Lower leg skin (tissue), 4 donors: ENCODE measurements at regions of chr16 and their contacts with region 1.

Region 1: DNA sequence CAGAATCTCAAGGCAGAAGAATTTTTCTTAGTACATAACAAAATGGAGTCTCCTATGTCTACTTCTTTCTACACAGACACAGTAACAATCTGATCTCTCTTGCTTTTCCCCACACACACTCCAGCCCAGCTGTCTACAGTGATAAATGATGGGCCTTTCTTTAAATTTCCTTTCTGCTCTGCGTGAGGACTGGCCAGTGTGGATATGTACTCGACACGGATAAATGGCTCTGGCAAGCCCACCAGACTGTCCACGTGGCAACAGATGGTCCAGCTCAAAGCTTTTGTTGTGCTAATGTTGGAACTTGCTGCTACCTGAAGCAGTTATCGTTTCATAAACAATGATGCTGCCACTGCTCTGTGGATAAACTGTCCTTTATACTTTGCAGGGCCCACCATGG is 410.7 kb downstream of the TMEM114 start:
- DNase-seq: no peak
- H3K4me3 ChIP-seq: no peak overlapping the region
- CTCF ChIP-seq: no peak
- POLR2A ChIP-seq: no peak

Region 2: DNA sequence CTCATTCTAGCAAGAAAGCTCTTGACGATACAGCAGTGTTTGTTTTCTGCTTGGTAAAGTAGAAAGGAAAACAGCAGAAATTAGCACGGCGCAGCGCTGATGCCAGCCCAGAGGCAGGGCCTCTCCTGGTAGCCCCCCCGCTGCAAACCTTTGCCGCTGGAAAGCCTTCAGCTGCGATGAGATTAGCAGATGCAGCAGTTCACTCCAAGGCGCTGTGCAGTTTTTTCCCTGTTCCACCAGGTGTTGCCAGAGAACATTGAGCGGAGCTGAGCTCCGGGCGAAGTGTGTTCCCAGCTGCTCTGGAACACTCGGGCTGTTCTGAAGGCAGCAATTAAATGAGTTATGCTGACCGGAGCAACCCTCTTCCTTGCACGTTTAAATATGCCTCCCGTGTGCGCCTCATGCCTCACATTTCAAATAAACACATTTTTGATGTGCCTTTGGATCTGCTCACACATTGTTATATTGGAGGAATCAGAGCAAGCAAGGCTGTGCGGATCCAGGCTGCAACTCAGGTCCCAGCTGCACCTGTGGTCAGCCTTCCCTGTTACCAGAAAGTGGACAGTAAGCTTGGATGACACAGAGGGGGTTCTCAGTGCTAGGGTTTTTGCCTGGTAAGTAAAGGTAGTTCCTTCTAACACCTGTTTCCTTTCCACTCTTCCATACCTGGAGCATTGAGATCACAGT is 774.3 kb before region 1 on chr16:
- intact Hi-C with region 1: loop called (anchors 5 kb)
- DNase-seq: peak in 1 of 2 donors; percentile 24
- H3K4me3 ChIP-seq: no peak overlapping the region
- CTCF ChIP-seq: no peak
- POLR2A ChIP-seq: no peak

Region 3: DNA sequence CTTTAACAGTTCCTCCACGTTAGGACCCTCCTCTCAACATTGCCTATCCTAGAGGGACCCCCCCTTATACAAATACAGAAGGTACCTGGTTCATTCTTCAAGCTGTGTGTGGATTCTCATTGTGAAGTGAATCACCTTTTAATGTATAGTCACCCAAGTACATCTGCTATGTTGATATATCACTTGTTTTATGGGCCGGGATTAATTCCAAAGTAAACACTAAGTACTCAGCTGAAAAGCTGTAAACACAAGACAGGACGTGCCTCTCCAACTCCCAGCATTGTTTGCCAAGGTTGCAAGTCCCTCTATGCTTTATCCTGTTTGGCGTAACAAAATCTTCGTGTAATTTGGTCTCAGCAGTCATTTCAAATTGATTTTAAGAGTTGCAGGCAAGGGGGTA is 723.4 kb before region 1 on chr16:
- intact Hi-C with region 1: no loop called
- DNase-seq: no peak
- H3K4me3 ChIP-seq: no peak overlapping the region
- CTCF ChIP-seq: no peak
- POLR2A ChIP-seq: no peak

Region 4: GRCh38 chr16:8258523-8258922 is 78.9 kb after region 1 on chr16:
- intact Hi-C with region 1: no loop called
- DNase-seq: no peak
- H3K4me3 ChIP-seq: no peak overlapping the region
- CTCF ChIP-seq: no peak
- POLR2A ChIP-seq: no peak